HAP-1 (cell line): ENCODE measurements at regions of chr5 and their contacts with region 1.

Region 1: DNA sequence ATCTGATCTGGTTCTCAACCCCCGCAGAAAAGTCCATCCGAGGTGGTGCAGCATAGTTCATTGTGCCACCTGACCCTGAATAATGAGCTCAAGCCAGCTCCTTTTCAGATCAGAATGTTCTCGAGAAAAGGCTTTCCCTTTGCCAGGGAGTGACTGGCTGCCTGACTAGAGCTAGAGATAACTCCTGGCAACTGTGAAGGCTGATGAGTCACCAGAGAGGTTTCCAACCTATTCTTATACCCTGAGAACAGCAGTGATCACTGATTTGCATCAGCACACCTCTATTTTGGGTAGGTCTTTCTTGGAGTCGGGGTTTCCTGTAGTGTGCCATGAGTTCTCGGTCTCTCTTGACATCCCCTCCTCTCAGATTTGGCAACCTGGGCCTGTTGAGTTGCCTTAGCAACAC is 127.9 kb downstream of the PIK3R1 start:
- DNase-seq: no peak
- H3K4me3 ChIP-seq: no peak overlapping the region
- H3K4me1 ChIP-seq: no peaks in the 10 kb centered on the region
- H3K27me3 ChIP-seq: no peaks in the 10 kb centered on the region

Region 2: DNA sequence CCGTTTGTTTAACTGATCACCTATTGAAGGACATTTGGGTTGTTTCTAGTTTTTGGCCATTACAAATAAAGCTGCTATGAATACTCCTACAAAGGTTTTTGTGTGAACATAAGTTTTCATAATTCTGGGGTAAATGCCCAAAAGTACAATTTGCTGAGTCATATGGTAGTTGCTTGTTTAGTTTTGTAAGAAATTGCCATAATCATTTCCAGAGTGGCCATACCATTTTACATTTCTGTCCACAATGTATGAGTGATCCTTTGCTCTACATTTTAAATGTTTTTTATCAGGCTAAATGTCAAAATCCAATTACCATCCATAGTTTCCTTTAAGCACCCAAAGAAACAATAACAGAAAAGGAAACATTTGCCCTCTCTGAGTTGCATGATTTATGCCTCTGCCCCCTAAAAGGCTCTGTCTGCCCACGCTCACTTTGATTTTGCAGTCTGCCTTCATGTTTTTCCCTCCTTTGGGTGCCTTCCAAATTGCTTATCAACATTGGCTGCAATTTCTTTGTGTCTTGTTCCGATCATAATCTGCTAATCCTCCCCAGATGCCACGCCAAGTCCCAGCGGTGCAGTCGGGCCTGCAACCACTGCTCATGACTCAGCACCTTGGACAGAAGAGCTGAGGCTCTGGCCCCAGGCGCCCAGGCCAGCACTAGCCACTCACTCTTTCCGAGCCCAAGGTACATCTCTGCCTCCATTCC is 211.3 kb after region 1 on chr5:
- in situ Hi-C with region 1: no loop called
- DNase-seq: peak; percentile 12 to 60
- H3K4me3 ChIP-seq: no peak overlapping the region
- H3K4me1 ChIP-seq: no peaks in the 10 kb centered on the region
- H3K27me3 ChIP-seq: no peaks in the 10 kb centered on the region

Region 3: GRCh38 chr5:68962757-68963484 is 619.5 kb after region 1 on chr5:
- in situ Hi-C with region 1: loop called (anchors 25 kb)
- DNase-seq: peak; percentile 60 to 73
- H3K4me3 ChIP-seq: no peak overlapping the region
- H3K4me1 ChIP-seq: no peaks in the 10 kb centered on the region
- H3K27me3 ChIP-seq: no peaks in the 10 kb centered on the region